WTC11 (cell line): ENCODE measurements at regions of chrX and their contacts with region 1.

Region 1: DNA sequence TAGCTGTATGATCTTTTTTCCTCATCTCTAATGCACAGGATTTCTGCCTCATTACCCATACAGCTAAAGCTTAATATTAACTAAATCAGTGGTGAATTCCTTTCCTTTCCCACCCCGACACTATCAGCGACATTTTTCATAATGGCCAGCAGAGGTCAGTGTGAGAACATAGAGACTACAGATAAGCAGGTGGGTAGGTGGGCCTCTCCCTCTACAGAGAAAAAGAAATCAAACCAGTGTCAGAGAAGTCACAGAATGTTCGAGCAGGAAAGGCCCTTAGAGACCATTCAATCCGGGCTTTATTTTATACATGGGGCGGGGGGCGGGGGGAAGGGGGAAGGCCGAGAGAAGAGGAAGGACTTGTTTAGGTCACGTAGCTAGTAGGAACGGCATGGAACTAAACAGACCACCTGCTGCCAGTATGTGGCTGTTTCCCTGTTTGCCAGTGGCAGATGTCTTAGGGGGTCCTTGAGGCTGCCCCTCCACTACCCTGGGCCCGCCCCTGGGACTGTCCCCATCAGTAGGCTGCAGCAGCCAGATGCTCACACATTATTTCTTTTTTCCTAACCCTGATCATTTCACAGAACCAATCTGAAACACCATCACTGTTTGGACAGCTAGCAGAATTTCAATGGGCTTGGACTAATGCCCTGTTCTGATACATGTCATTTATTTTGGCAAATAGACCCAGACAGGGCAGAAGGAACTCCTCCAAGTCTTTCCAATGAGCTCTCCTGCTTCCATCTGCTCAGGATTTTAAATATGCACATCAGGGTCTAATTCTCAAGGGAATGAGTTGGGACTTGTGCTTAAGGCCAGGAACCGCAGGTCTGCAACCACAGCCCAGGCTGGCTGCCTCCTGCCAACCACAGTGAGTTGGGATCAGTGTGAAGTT is 133.4 kb downstream of the ATG4A start:
- DNase-seq: peak; percentile 12
- ATAC-seq: peak; percentile 92
- H3K4me3 Mint-ChIP-seq: no peak overlapping the region
- H3K27ac Mint-ChIP-seq: no peak overlapping the region
- H3K4me1 Mint-ChIP-seq: peaks cover 19% of the 10 kb centered on the region
- H3K27me3 Mint-ChIP-seq: peaks cover 2% of the 10 kb centered on the region; the same call in 1 of the 2 replicates
- CTCF ChIP-seq: peak; percentile 10; the same call in 1 of the 2 replicates

Region 2: GRCh38 chrX:108148524-108148923 is 76.5 kb before region 1 on chrX:
- CTCF ChIA-PET with region 1: no interaction called
- POLR2A ChIA-PET with region 1: no interaction called
- DNase-seq: no peak
- ATAC-seq: no peak
- H3K4me3 Mint-ChIP-seq: no peak overlapping the region
- H3K27ac Mint-ChIP-seq: no peak overlapping the region
- H3K4me1 Mint-ChIP-seq: no peaks in the 10 kb centered on the region
- H3K27me3 Mint-ChIP-seq: no peaks in the 10 kb centered on the region
- CTCF ChIP-seq: no peak

Region 3: DNA sequence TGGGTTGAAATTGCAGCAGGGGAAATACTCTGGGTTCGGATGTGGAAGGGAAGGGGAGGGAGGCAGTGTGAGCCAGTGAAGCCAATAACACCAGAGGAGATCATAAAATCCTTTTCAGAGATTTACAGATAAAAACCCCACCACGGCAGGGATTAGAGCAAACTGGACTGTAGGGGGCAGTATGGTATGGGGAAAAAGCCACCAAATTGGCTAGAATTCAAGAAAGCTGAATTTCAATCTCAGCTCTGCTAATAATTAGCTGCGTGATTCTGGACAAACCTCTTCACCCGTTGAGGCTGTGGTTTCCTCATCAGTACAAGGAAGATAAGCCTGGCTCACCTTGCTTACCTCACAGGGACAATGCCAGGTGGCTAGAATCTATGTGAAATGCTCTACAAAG is 25.3 kb before region 1 on chrX:
- CTCF ChIA-PET with region 1: interaction called, 12 read pairs
- POLR2A ChIA-PET with region 1: no interaction called
- DNase-seq: peak; percentile 18
- ATAC-seq: peak; percentile 38; the same call in 1 of the 2 replicates
- H3K4me3 Mint-ChIP-seq: no peak overlapping the region
- H3K27ac Mint-ChIP-seq: no peak overlapping the region
- H3K4me1 Mint-ChIP-seq: peaks cover 3% of the 10 kb centered on the region; the same call in 1 of the 2 replicates
- H3K27me3 Mint-ChIP-seq: no peaks in the 10 kb centered on the region
- CTCF ChIP-seq: peak; percentile 40; the same call in 1 of the 2 replicates

Region 4: GRCh38 chrX:108299101-108299591 is 74.2 kb after region 1 on chrX:
- CTCF ChIA-PET with region 1: interaction called, 17 read pairs
- POLR2A ChIA-PET with region 1: no interaction called
- DNase-seq: no peak
- ATAC-seq: peak; percentile 36; the same call in 1 of the 2 replicates
- H3K4me3 Mint-ChIP-seq: no peak overlapping the region
- H3K27ac Mint-ChIP-seq: peak overlapping the region; percentile 89
- H3K4me1 Mint-ChIP-seq: peaks cover 19% of the 10 kb centered on the region
- H3K27me3 Mint-ChIP-seq: no peaks in the 10 kb centered on the region
- CTCF ChIP-seq: no peak

Region 5: DNA sequence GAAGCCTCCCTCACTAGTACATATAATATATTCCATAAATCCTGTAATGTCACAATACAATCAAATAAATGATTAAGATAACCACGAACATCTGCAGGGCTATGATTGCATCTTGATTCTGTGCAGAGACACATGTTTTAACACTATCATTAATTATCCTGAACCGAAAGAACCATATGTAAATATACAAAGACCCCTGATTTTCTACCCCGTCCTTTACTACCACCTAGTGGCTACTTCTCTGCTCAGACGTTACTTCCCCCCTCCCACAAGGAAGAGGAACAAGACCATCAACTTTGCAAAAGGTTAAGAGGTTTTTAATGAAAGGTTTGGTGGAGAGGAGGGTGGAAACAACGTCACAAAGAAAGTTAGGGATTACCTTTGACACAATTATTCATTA is 79.2 kb after region 1 on chrX:
- CTCF ChIA-PET with region 1: interaction called, 17 read pairs
- POLR2A ChIA-PET with region 1: no interaction called
- DNase-seq: no peak
- ATAC-seq: peak; percentile 67
- H3K4me3 Mint-ChIP-seq: no peak overlapping the region
- H3K27ac Mint-ChIP-seq: no peak overlapping the region
- H3K4me1 Mint-ChIP-seq: peaks cover 7% of the 10 kb centered on the region
- H3K27me3 Mint-ChIP-seq: no peaks in the 10 kb centered on the region
- CTCF ChIP-seq: no peak

Region 6: DNA sequence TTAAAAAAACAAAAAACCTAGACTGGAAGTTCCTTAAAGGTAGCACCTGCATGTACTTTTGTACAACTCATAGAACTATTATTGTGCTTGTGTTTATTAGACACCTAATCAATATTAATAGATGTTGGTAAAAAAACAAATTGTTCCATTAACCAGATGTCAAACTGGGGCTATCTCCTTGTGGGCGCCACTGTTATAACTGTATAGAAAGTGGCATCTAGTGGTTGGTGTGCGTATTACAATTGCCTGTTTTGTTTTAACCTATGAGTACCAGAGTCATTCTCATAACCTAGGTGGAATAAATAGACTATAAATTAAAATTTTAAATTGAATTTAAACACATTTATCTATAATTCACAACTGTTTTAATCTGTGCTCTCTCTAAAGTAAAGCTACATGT is 312.0 kb after region 1 on chrX:
- CTCF ChIA-PET with region 1: interaction called, 18 read pairs
- POLR2A ChIA-PET with region 1: no interaction called
- DNase-seq: no peak
- ATAC-seq: 0 out of 2 replicates have a peak, but pooled peaks have one; percentile 39
- H3K4me3 Mint-ChIP-seq: no peak overlapping the region
- H3K27ac Mint-ChIP-seq: no peak overlapping the region
- H3K4me1 Mint-ChIP-seq: peaks cover 34% of the 10 kb centered on the region
- H3K27me3 Mint-ChIP-seq: no peaks in the 10 kb centered on the region
- CTCF ChIP-seq: peak; percentile 40; the same call in 1 of the 2 replicates